Ovary (tissue), 10 donors: ENCODE measurements at regions of chr5 and their contacts with region 1.

Region 1: GRCh38 chr5:39005566-39006232 is 68.5 kb downstream of the RICTOR start:
- DNase-seq: no peak
- H3K4me3 ChIP-seq: no peak overlapping the region
- H3K27ac ChIP-seq: no peak overlapping the region
- H3K4me1 ChIP-seq: no peaks in the 10 kb centered on the region
- H3K27me3 ChIP-seq: no peaks in the 10 kb centered on the region
- CTCF ChIP-seq: no peak
- EP300 ChIP-seq: no peak
- POLR2A ChIP-seq: no peak

Region 2: GRCh38 chr5:39040875-39041274 is 35.2 kb after region 1 on chr5:
- intact Hi-C with region 1: no loop called
- DNase-seq: peak in 1 of 5 donors; percentile 10
- H3K4me3 ChIP-seq: no peak overlapping the region
- H3K27ac ChIP-seq: no peak overlapping the region
- H3K4me1 ChIP-seq: no peaks in the 10 kb centered on the region
- H3K27me3 ChIP-seq: no peaks in the 10 kb centered on the region
- CTCF ChIP-seq: no peak
- EP300 ChIP-seq: no peak
- POLR2A ChIP-seq: no peak

Region 3: DNA sequence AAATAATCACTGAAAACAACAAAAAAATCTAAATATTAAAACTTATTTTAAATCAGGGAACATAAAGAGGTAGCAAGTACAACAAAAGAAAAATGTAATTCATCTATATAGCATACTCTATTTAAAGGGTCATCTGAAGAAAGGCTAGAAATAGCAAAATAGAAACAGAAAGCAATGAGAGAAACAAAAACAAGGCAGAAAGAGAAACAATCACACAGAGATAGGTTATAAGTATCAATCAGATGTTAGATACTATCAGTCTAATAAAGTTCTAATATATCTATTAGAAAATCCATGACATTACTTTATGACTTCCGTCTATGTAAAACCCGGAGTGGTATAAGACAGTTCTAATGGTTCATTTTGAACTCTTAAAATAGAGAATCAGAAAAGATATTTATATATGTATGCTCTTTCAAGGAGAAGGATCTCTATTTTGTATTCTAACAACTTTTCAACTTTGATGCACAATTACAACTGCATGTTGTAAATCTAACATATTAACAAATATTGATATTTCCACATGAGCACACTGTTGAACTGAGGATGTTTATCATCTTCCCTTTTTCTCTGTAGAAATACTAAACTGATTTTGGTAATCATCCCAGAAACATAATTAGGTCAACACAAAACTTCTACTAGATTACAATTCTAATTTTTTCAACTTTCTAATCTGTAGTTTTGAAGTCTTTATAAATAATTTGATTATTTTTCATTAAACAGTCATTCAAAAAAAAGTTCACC is 52.7 kb after region 1 on chr5:
- intact Hi-C with region 1: loop called in 1 of 4 experiments (anchors 2 kb)
- DNase-seq: no peak
- H3K4me3 ChIP-seq: no peak overlapping the region
- H3K27ac ChIP-seq: no peak overlapping the region
- H3K4me1 ChIP-seq: peaks cover 3% of the 10 kb centered on the region
- H3K27me3 ChIP-seq: no peaks in the 10 kb centered on the region
- CTCF ChIP-seq: no peak
- EP300 ChIP-seq: no peak
- POLR2A ChIP-seq: no peak

Region 4: GRCh38 chr5:39080597-39081204 is 75.0 kb after region 1 on chr5:
- intact Hi-C with region 1: loop called in 2 of 4 experiments (anchors 10 kb)
- DNase-seq: peak in 4 of 5 donors; percentile 28 to 60 (median 40)
- H3K4me3 ChIP-seq: no peak overlapping the region
- H3K27ac ChIP-seq: no peak overlapping the region
- H3K4me1 ChIP-seq: no peaks in the 10 kb centered on the region
- H3K27me3 ChIP-seq: no peaks in the 10 kb centered on the region
- CTCF ChIP-seq: peak; percentile 39 to 62 (median 53)
- EP300 ChIP-seq: no peak
- POLR2A ChIP-seq: no peak